ENCODE measurements at regions of chr16 and their contacts with region 1.

Region 1: DNA sequence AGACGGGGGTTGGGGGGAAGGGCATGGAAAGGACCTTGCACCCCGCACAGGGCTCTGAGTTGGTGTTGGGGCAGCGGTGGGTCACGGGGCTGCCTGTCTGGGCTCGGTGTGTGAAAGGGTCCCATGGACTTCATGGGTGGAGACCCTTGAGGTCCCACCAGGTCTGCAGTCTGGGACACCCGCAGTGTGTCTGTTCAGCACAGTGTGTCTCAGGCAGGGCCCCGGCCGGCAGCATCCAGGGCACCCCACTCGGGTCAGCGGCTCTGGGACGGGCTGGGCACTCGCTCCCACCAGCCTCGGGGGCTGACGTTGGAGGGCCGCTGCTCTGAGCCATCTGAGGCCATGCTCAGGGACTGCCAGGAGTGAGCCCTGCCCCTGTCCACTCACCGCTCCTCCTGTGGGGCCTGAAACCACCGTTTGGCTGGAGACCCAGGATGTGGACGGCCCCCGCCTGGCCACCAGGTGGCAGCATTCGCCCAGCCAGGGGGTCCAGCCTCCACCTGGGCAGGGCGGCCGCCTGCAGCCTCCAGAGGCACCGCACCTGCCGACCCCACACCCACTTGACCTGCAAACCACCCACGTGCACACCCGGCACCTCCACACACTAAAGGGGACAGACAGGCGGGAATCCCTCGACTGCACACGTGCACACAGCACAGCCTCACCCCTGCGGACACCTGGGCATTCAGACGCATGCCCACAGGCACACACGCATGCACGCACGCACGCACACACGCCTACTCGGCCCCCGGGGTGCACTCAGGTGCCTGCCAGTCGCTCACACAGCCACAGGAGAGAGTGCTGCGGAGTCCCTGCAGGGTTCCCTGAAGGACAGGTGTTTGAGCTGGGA is 10.1 kb upstream of the ZFPM1 start:
- DNase-seq: peak; percentile 96
- CTCF ChIP-seq: peak; percentile 95

Region 2: DNA sequence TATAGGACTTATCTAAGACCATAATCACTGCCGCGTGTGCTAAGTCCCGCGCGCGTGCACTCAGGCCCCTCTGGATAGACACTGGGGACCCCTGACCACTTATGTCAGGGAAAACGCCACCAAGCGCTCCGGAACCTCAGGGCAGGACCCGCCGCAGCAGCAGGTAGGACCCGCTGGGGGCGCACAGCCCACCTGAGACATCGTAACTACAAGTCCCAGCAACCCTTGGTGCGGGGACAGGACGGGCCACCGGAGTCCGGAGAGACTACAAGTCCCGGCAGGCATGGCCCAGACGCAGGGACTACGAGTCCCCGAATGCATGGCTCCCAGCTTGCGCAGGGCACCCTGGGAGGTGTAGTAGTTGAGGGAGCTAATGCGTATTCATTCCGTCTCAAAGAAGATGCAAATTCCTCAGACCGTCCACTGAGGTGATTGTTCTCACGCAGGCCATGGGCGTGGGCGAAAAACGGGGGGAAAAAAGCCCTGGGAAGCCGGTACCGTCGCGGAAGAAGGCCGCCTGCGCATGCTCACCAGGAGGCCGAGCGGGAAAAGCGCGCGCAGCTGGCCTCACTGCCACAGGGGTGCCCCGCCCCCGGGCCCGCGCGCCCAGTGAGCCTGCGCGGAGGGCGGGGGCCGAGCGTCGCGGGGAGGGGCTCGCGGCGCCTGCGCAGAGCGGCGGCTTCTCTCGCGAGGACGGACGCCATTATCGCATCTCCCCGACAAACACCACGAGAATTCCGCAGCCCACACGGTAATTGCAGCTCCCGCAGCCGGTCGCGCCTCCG is 492.0 kb before region 1 on chr16 and contains the start of gene BANP:
- in situ Hi-C with region 1: loop called (anchors 25 kb)
- DNase-seq: peak; percentile 98
- CTCF ChIP-seq: peak; percentile 31

Region 3: DNA sequence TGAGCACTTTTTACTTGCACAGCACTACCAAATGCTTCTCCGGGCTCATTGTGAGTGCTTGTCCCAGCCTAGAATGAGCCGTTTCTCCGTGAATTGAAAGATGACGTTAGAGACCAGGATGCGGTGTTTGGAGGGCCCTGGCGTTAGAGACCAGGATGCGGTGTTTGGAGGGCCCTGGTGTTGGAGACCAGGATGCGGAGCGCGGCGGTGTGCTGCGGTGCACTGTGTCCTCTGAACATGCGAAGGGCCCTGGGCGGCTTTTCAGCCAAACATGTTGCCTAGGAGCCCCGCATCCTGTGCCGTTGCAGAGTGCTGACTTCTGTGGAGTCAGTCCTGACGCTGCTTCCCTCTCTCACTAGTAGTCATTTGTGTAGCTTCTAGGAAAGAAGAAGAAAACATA is 449.1 kb before region 1 on chr16:
- in situ Hi-C with region 1: no loop called
- DNase-seq: no peak
- CTCF ChIP-seq: no peak

Region 4: DNA sequence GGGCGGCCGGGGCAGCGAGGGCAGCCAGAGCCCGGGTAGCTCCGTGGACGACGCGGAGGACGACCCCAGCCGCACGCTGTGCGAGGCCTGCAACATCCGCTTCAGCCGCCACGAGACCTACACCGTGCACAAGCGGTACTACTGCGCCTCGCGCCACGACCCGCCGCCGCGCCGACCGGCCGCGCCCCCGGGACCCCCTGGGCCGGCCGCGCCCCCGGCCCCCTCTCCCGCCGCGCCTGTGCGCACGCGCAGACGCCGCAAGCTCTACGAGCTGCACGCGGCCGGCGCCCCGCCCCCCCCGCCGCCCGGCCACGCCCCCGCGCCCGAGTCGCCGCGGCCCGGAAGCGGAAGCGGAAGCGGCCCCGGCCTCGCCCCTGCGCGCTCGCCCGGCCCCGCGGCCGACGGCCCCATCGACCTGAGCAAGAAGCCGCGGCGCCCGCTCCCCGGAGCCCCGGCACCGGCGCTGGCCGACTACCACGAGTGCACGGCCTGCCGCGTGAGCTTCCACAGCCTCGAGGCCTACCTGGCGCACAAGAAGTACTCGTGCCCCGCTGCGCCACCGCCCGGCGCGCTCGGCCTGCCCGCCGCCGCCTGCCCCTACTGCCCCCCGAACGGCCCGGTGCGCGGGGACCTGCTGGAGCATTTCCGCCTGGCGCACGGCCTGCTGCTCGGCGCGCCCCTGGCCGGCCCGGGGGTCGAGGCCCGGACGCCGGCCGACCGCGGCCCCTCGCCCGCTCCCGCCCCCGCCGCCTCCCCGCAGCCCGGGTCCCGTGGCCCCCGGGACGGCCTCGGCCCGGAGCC is 91.2 kb after region 1 on chr16:
- in situ Hi-C with region 1: loop called (anchors 25 kb)
- DNase-seq: peak; percentile 99
- CTCF ChIP-seq: peak; percentile 19

Region 5: GRCh38 chr16:88737298-88738150 is 294.6 kb after region 1 on chr16:
- in situ Hi-C with region 1: no loop called
- DNase-seq: peak; percentile 92
- CTCF ChIP-seq: peak; percentile 97